Activated naive CD8-positive, alpha-beta T cell treated with anti-CD3 and anti-CD28 coated beads, Interleukin-2, amount 10 ng/mL, durations not matched to agents 7 days and 5 days (primary cell): ENCODE measurements at regions of chr2 and their contacts with region 1.

Region 1: GRCh38 chr2:98479959-98480524 is 35.4 kb downstream of the INPP4A start:
- DNase-seq: no peak
- ATAC-seq: peak; percentile 50
- H3K4me3 Mint-ChIP-seq: peak overlapping the region; percentile 74
- H3K27ac Mint-ChIP-seq: peak overlapping the region; percentile 95
- H3K4me1 Mint-ChIP-seq: peaks cover 88% of the 10 kb centered on the region
- H3K27me3 Mint-ChIP-seq: no peaks in the 10 kb centered on the region

Region 2: DNA sequence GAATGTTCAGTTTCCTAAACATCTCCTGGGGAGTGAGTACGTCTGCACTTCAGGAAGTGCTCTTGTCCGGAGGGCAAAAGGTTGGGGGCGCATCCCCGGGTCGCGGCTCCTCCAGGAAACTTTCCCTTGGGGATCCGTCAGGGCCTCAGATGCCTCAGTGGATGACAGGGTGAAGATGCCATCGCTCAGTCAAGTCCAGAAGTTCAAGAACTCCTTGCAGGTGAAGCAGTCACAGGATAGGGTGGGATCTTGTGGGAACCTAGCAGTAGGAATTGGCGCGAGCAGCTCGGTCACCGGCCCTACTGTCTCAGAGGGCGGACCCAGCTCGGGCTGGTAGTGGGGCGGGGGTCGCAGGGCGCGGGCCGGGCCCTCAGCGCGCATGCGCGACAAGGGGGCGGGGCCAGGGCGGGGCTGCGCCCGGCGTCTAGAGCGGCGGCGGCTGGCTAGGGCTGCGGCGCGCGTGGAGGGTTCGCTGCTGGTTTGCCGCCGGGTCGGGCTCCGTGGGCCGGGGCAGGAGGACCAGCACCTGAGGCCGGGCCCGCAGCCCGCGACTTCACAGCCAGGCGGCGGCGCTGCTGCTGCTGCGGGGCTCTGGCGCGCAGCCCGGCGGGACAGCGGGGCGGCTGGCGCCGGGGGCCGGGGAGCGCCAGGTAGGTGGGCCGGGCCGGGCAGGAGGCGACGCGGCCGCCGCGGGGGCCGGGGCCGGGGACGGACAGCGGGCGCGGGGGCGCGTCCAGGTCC is 35.4 kb before region 1 on chr2 and contains the start of gene INPP4A:
- POLR2A ChIA-PET with region 1: interaction called, 10 read pairs
- DNase-seq: peak; percentile 88
- ATAC-seq: peak; percentile 69
- H3K4me3 Mint-ChIP-seq: peak within 1 kb of the TSS; percentile 96
- H3K27ac Mint-ChIP-seq: peak within 1 kb of the TSS; percentile 95
- H3K4me1 Mint-ChIP-seq: peaks cover 32% of the 10 kb centered on the region
- H3K27me3 Mint-ChIP-seq: no peaks in the 10 kb centered on the region
- total RNA-seq, gene INPP4A: 147 to 159 TPM

Region 3: DNA sequence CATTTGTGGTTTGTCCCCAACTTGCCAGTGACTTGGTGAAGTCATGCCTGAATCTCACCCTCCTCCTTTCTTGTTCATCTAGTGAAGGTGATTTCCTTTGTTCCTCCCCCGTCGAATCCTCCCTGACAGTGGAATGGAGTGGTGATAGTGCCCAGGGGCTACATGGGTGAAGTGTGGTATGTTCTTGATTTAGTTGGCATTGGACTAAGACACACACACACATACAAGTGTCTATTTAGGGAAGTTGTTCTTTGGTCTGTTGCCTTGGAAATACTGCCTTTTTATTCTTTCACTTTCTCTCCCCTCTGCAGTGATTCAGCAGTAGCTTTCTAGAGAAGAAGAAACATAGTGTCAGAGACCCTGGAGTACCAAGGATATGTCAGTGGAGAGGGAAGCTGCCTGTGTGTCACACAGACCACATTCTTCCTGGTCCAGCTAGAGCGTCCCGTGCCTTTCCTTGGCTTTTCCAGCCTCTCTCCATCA is 24.5 kb before region 1 on chr2:
- POLR2A ChIA-PET with region 1: interaction called, 171 read pairs
- DNase-seq: no peak
- ATAC-seq: peak; percentile 26
- H3K4me3 Mint-ChIP-seq: peak overlapping the region; percentile 79
- H3K27ac Mint-ChIP-seq: peak overlapping the region; percentile 87
- H3K4me1 Mint-ChIP-seq: peaks cover 92% of the 10 kb centered on the region
- H3K27me3 Mint-ChIP-seq: no peaks in the 10 kb centered on the region

Region 4: DNA sequence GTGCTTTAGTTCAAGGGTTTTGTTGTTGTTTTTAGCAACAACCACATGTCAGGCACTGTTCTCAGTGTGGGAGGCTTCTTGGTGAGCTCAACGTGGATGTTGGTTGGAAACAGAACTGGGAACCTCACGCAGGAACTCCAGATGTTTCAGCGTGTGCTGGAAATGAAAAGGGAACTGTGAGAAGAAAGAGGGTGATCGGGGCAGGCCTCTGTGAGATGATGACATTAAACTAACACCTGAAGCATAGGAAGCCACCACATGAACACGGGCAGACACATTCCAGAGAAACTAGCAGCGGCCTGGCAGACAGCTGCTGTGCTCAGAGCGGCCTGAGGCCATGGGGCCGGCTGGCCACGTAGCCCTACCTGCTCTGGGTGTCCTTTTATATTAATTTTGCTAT is 61.9 kb after region 1 on chr2:
- POLR2A ChIA-PET with region 1: no interaction called
- DNase-seq: no peak
- ATAC-seq: no peak
- H3K4me3 Mint-ChIP-seq: no peak overlapping the region
- H3K27ac Mint-ChIP-seq: peak overlapping the region; percentile 17
- H3K4me1 Mint-ChIP-seq: peaks cover 16% of the 10 kb centered on the region
- H3K27me3 Mint-ChIP-seq: no peaks in the 10 kb centered on the region